Activated CD8-positive, alpha-beta T cell treated with anti-CD3 and anti-CD28 coated beads for 36 hours (primary cell): ENCODE measurements at regions of chr12 and their contacts with region 1.

Region 1: DNA sequence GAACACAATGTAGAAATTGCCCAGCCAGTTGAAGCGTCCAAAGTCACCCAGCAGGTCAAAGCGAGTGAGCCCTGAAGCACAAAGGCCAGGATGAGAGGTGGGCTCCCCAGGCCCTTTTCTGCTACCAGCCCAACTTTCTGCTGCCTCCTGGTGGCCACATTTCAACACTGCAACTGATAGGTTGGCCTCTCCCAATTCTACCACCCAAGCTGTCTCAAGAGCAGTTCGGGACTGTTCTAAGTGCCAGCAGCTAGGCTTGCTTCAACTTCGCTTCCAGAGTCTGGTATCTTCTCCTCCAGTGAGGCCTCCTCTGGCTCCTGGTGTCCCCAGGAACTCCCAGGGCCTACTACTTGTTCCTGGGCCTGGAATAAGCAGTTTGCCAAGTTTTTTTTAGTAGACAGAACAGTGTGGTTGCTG is 3.4 kb upstream of the DHH start:
- DNase-seq: peak; percentile 81
- ATAC-seq: peak; percentile 87
- H3K4me3 Mint-ChIP-seq: no peak overlapping the region
- H3K27ac Mint-ChIP-seq: no peak overlapping the region
- H3K4me1 Mint-ChIP-seq: peaks cover 7% of the 10 kb centered on the region
- H3K27me3 Mint-ChIP-seq: peaks cover 21% of the 10 kb centered on the region
- CTCF ChIP-seq: peak; percentile 87

Region 2: GRCh38 chr12:49069507-49070346 is 28.3 kb before region 1 on chr12 and contains the start of gene RHEBL1:
- CTCF ChIA-PET with region 1: interaction called, 220 read pairs
- POLR2A ChIA-PET with region 1: interaction called, 3 read pairs
- intact Hi-C with region 1: loop called (anchors 2 kb)
- DNase-seq: peak; percentile 100
- ATAC-seq: peak; percentile 100
- H3K4me3 Mint-ChIP-seq: peak within 1 kb of the TSS; percentile 98
- H3K27ac Mint-ChIP-seq: peak within 1 kb of the TSS; percentile 92
- H3K4me1 Mint-ChIP-seq: peaks cover 27% of the 10 kb centered on the region
- H3K27me3 Mint-ChIP-seq: no peaks in the 10 kb centered on the region
- CTCF ChIP-seq: no peak
- total RNA-seq, gene RHEBL1: 18.5 to 19.8 TPM

Region 3: GRCh38 chr12:49110464-49111155 is 12.6 kb after region 1 on chr12 and contains the start of gene LMBR1L:
- CTCF ChIA-PET with region 1: interaction called, 98 read pairs
- POLR2A ChIA-PET with region 1: interaction called, 3 read pairs
- intact Hi-C with region 1: no loop called
- DNase-seq: peak; percentile 99
- ATAC-seq: peak; percentile 99
- H3K4me3 Mint-ChIP-seq: peak within 1 kb of the TSS; percentile 87
- H3K27ac Mint-ChIP-seq: peak within 1 kb of the TSS; percentile 97
- H3K4me1 Mint-ChIP-seq: peaks cover 35% of the 10 kb centered on the region
- H3K27me3 Mint-ChIP-seq: no peaks in the 10 kb centered on the region
- CTCF ChIP-seq: peak; percentile 50
- total RNA-seq, gene LMBR1L: 43.5 to 50.9 TPM

Region 4: DNA sequence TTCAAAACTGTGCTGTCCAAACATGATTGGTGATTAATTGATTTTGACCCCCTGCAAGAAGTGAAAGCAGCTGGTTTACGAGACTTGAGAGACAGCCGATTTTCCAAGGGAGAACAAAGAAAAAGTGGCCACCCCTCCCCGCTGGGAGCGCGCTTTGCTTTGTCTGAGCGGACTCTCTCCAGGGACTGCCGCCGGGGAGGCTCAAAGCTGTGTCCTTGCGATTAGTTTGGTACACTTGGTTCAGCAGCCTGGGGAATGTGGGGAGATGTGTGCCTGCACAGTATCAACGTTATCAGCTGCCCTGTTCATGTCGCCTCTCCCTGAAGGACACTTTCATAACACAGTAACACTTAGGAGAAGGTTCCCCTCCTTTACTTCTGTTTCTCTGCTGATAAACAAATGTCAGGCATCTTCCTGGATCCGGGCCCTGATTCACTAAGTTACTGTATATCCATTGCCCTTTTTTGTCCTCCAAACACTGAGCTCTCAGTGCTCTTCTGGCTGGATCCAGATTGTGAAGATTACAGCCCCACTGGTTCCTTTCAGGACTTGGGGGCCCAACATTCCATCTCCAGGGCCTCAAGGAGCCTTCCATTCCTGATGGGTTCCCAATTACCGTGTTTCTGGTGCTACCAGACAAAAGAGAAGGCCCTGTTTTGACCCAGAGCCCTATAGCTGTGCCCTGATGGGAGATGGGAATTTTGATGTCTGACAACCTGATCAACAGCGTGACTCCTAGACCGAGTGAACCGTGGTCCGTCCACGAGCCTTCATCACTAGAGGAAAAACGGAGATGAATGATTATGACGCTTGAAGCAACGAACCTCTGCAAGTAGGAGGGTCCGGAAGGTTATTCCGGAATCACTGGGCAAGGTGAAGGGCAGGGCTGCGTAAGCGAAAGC is 135.1 kb after region 1 on chr12:
- CTCF ChIA-PET with region 1: interaction called, 11 read pairs
- POLR2A ChIA-PET with region 1: no interaction called
- intact Hi-C with region 1: loop called (anchors 10 kb)
- DNase-seq: no peak
- ATAC-seq: no peak
- H3K4me3 Mint-ChIP-seq: peak overlapping the region; percentile 85
- H3K27ac Mint-ChIP-seq: peak overlapping the region; percentile 55
- H3K4me1 Mint-ChIP-seq: peaks cover 13% of the 10 kb centered on the region
- H3K27me3 Mint-ChIP-seq: no peaks in the 10 kb centered on the region
- CTCF ChIP-seq: no peak